ENCODE measurements at regions of chr11 and their contacts with region 1.

Region 1: DNA sequence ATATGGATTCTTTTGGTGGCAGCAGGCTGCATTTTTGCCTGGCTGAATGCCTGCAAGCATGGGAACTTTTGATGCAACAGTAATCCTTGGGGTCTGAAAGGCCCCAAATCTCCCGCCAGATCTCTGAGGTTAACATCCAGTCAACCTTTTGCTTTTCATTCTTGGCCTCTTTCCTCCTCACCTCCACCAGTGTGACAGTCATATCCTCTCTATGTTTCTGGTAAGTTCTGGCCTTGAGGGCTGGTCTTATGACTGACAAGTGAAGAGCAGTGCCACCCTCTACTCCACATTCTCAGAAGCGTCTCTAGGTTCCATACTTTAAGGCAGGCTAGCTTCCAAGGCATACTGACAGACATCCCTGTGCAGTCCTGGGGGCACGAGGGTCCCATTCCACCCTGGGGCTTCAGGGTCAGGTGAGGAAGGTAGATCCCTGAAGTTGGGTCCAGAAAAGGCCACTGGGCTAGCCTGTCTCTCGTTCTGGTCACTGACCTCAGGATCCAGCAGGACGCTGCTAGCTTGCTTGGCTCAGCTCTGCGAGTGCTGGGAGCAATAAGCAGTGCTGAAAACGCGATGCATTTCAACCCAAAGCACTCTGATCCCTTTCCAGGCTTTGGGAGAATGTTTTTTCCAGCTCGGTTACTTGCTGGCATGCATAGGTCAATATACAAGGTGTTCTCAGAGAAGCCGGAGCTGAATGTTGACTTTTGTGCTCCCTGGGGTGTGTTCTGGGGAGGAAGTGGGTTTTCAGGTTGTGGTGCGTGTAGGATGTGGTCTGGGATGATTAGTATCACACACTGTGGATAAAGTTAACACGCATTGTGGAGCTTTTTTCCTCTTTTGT is 75.2 kb downstream of the PTPRJ start:
- DNase-seq: peak in 9 of 10 donors; percentile 30 to 86 (median 61)
- ATAC-seq: peak; percentile 86 to 91
- H3K4me3 Mint-ChIP-seq: peak overlapping the region; percentile 52 to 87 (median 76)
- H3K27ac Mint-ChIP-seq: peak overlapping the region; percentile 51 to 87 (median 76)
- H3K4me1 Mint-ChIP-seq: peaks cover 28 to 89% (median 78%) of the 10 kb centered on the region in 4 donors
- H3K27me3 Mint-ChIP-seq: no peaks in the 10 kb centered on the region

Region 2: DNA sequence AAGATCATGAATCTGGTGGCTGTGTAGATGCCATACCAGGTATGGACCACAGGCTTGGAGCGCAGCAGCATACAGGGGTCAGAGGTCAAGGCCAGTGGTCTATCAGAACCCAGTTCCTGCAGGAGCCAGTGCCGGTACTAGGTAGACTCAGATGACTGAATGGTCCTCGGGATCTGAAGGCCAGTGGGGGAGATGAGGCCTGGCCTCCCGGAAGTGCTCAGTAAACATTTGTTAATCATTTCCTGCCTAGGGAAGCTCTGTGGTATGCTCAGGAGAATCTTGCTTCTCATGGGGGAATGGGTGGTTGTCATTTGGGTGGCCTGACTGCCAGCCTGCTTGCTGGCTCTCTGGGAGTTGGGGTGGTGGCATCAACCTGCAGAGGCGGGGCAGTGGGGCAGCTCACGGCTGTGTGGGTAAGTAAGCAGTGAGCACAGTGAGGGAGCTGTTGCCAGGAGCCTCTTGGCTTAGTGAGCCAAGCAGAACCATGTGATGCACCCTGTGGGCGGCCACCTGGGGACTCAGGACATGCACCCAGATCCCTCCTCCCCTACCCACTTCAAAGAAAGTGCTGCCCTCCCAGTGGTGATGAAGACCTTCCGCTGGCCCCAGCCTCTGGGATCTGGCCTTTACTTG is 42.1 kb before region 1 on chr11:
- POLR2A ChIA-PET with region 1: interaction called, 13 read pairs
- DNase-seq: peak in 4 of 10 donors; percentile 6 to 65 (median 36)
- ATAC-seq: peak; percentile 31 to 56
- H3K4me3 Mint-ChIP-seq: peak overlapping the region; percentile 34 to 82 (median 62)
- H3K27ac Mint-ChIP-seq: peak overlapping the region; percentile 80 to 96 (median 92)
- H3K4me1 Mint-ChIP-seq: peaks cover 38 to 88% (median 69%) of the 10 kb centered on the region in 4 donors
- H3K27me3 Mint-ChIP-seq: no peaks in the 10 kb centered on the region

Region 3: DNA sequence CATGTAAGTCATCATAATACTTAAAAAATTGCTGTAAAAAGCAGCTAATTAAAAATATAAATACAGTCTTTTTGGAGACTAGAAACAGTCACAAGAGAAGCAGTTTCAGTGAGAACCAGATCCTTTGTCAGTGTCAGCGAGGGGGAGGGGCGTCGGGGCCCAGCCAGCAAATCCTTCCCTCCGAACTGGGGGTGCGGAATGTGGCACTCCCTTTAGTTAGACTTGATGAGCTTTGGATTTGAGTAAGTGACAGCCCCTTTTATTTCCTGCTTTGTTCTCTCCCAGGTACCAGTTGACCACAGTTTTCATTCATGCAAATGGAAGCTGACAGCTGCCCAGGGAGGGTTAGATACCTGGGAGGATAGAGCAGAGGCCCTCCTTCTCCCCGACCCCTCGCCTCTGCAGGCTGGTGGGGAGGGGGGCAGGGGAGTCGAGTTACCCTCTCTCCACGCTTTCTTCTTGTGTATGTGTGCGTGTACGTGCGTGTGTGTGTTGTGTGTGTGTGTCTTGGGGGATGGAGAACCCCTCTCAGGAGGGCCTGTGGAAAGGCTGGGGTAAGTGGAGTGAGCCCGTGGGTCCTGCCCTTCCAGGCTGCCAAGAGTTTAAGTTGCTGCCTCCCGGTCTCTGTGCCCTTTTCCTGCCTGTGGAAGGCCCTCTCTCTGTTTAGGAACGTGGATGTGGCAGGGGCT is 36.8 kb before region 1 on chr11:
- POLR2A ChIA-PET with region 1: interaction called, 13 read pairs
- DNase-seq: no peak
- ATAC-seq: no peak
- H3K4me3 Mint-ChIP-seq: peak overlapping the region in 2 of 10 donors; percentile 15 to 59
- H3K27ac Mint-ChIP-seq: peak overlapping the region in 9 of 10 donors; percentile 9 to 92 (median 75)
- H3K4me1 Mint-ChIP-seq: peaks cover 28 to 90% (median 61%) of the 10 kb centered on the region in 4 donors
- H3K27me3 Mint-ChIP-seq: no peaks in the 10 kb centered on the region

Region 4: GRCh38 chr11:48043111-48043990 is 12.2 kb before region 1 on chr11:
- POLR2A ChIA-PET with region 1: interaction called, 25 read pairs
- DNase-seq: peak in 3 of 10 donors; percentile 7 to 34 (median 25)
- ATAC-seq: peak; percentile 42 to 85
- H3K4me3 Mint-ChIP-seq: peak overlapping the region; percentile 22 to 73 (median 46)
- H3K27ac Mint-ChIP-seq: peak overlapping the region; percentile 46 to 86 (median 73)
- H3K4me1 Mint-ChIP-seq: peaks cover 29 to 69% (median 50%) of the 10 kb centered on the region in 4 donors
- H3K27me3 Mint-ChIP-seq: no peaks in the 10 kb centered on the region

Region 5: GRCh38 chr11:48123934-48124755 is 68.6 kb after region 1 on chr11:
- POLR2A ChIA-PET with region 1: no interaction called
- DNase-seq: no peak
- ATAC-seq: no peak
- H3K4me3 Mint-ChIP-seq: no peak overlapping the region
- H3K27ac Mint-ChIP-seq: no peak overlapping the region
- H3K4me1 Mint-ChIP-seq: peaks cover 0 to 13% (median 2%) of the 10 kb centered on the region in 4 donors
- H3K27me3 Mint-ChIP-seq: no peaks in the 10 kb centered on the region

Measured in naive thymus-derived CD8-positive, alpha-beta T cell (primary cell).